ENCODE measurements at regions of chr10 and their contacts with region 1.

Region 1: DNA sequence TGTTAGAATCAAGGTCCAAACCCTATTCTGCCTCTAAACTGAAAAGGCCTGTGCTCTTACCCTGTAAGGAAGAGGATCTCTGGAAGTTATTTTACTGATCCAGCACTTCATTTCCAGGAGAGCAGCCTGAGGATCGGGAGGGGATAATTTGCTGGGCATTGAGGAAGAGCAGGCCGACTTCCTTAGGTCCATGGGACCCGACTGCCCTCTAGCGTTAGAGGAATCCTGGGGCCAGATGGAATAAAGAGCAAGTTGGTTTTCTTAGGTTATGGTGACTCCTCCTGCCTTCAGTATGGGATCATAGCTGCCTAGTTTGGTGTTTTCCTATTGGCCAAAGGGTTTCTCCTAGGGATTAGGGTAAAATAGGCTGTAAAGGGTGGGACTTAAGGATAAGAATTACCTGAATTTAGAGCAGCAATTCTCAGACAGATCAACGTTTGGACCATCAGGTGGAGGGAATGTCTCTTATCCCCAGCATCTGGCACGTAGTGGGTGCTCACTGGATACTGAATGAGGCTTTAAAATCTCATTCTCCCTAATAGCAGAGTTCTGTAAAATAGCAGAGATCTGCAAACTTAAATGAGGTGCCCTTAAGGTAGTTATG is 40.0 kb upstream of the SORBS1 start:
- DNase-seq: peak; percentile 78
- H3K4me3 ChIP-seq: no peak overlapping the region
- H3K27ac ChIP-seq: no peak overlapping the region
- H3K4me1 ChIP-seq: no peaks in the 10 kb centered on the region
- H3K27me3 ChIP-seq: no peaks in the 10 kb centered on the region
- CTCF ChIP-seq: peak; percentile 74 to 94 (median 92)
- POLR2A ChIP-seq: no peak

Region 2: DNA sequence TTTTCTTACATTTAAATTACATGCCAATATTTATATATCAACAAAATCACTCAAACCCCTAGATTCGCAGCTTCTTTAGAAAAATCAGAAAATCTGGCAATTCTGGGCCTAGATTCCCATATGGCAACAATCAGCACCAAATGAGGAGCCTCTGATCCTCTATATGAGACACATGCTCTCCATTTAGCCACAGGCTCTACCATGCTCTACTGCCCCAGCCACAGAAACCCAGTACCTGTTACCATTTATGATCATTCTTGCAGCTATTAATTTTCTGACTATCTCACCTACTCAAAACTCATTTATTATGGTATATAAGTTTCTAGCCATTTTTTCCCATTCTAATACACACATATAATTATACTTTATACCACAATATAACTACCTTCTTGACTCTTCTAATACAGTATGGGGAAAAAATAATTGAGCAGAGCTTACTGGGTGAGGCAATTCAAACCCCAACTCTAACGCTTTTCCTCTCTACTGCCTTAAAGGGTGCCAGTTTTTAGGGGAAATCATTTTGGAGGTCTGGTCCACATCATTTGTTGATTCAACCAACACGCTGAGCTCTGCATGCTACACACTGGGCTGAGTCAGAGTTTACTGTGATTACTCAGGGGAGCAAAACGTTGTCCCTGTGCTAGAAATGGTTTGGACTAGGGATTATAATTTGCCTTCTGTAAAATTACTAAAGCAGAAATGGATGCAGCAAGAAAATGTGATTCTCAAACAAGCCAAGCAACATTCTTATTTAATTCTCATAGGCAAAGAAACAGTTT is 322.0 kb before region 1 on chr10:
- intact Hi-C with region 1: no loop called
- DNase-seq: no peak
- H3K4me3 ChIP-seq: no peak overlapping the region
- H3K27ac ChIP-seq: peak overlapping the region; percentile 47 to 52
- H3K4me1 ChIP-seq: no peaks in the 10 kb centered on the region
- H3K27me3 ChIP-seq: no peaks in the 10 kb centered on the region
- CTCF ChIP-seq: no peak
- POLR2A ChIP-seq: no peak

Region 3: DNA sequence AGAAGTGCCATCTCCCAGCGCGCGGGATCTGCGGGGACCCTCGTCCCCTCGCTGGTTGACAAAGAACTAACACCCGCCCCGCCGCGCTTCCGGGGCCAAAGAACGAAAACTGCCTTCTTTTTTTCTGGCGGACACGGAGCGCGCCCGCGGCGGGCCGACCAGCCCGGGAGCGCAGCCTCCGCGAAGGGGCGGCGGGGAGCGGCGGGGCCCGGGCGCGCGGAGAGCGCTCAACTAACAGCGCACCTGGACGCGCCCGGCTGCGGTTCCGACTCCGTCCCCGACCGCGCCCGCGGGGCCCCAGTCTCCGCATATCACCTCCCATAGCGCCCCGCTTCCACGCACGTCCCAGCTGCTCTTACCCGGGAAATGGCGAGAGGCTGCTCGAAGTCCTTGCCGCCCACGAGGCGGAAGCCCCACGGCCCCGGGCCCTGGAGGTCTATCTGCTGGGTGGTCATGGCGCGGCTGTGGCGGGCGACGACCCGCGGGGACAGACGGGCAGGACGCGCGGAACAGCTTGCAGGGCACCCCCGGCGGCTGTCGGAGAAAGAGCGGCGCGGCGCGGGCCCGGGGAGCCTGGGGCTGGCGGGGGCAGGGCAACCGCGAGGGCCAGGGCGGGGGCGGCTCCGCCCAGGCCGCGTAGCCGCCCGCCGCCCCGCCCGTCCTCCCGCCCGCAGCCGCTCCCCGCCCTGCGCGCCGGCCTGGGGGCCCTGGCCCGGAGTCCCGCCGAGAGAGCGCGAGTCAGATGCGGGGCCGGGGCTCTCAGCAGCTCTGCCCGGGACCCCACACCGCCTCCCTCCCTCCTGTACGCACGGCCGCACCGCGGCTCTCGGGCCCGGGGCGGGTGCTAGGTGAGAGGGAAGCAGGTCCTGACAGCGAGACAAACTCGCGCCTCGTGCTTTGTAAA is 310.5 kb before region 1 on chr10 and contains the start of gene PDLIM1:
- intact Hi-C with region 1: no loop called
- DNase-seq: peak; percentile 60
- H3K4me3 ChIP-seq: peak within 1 kb of the TSS; percentile 86 to 88
- H3K27ac ChIP-seq: peak within 1 kb of the TSS; percentile 78
- H3K4me1 ChIP-seq: no peaks in the 10 kb centered on the region
- H3K27me3 ChIP-seq: no peaks in the 10 kb centered on the region
- CTCF ChIP-seq: peak in 2 of 4 experiments; percentile 39 to 40
- POLR2A ChIP-seq: peak; percentile 92
- total RNA-seq, gene PDLIM1: 63.2 to 82.0 TPM

Region 4: GRCh38 chr10:95374597-95375209 is 226.5 kb before region 1 on chr10:
- intact Hi-C with region 1: loop called (anchors 2 kb)
- DNase-seq: peak; percentile 65
- H3K4me3 ChIP-seq: no peak overlapping the region
- H3K27ac ChIP-seq: no peak overlapping the region
- H3K4me1 ChIP-seq: no peaks in the 10 kb centered on the region
- H3K27me3 ChIP-seq: no peaks in the 10 kb centered on the region
- CTCF ChIP-seq: peak; percentile 84 to 89 (median 87)
- POLR2A ChIP-seq: no peak

Region 5: GRCh38 chr10:95430231-95430951 is 170.8 kb before region 1 on chr10:
- intact Hi-C with region 1: loop called (anchors 2 kb)
- DNase-seq: peak; percentile 42
- H3K4me3 ChIP-seq: no peak overlapping the region
- H3K27ac ChIP-seq: no peak overlapping the region
- H3K4me1 ChIP-seq: no peaks in the 10 kb centered on the region
- H3K27me3 ChIP-seq: no peaks in the 10 kb centered on the region
- CTCF ChIP-seq: peak; percentile 92 to 98 (median 96)
- POLR2A ChIP-seq: no peak

Region 6: DNA sequence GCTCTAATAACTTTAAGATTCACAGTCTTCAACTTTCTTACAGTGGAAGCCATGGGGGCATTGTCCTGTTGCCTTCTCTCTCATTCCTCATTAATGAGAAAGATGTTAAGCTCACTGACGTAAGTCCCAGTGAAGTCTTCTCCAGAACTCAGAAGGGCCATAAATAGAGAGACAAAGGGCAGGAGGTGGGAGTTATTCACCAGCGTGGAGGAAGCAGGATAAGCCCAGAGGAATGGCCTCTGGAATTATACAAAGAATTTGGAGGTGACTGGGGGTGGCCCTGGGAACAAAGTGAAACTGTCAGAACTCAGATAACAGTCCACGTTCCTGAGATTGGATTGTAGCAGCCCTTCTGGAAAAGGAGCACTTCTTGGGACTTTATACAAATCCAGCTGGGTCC is 92.5 kb before region 1 on chr10:
- intact Hi-C with region 1: loop called (anchors 10 kb)
- DNase-seq: no peak
- H3K4me3 ChIP-seq: no peak overlapping the region
- H3K27ac ChIP-seq: peak overlapping the region; percentile 66 to 69
- H3K4me1 ChIP-seq: no peaks in the 10 kb centered on the region
- H3K27me3 ChIP-seq: no peaks in the 10 kb centered on the region
- CTCF ChIP-seq: no peak
- POLR2A ChIP-seq: no peak

Region 7: GRCh38 chr10:95561182-95562075 is 39.8 kb before region 1 on chr10 and contains the start of gene SORBS1:
- intact Hi-C with region 1: loop called (anchors 5 kb)
- DNase-seq: peak; percentile 97
- H3K4me3 ChIP-seq: peak within 1 kb of the TSS; percentile 72 to 80
- H3K27ac ChIP-seq: peak within 1 kb of the TSS; percentile 90 to 92
- H3K4me1 ChIP-seq: no peaks in the 10 kb centered on the region
- H3K27me3 ChIP-seq: no peaks in the 10 kb centered on the region
- CTCF ChIP-seq: peak in 1 of 4 experiments; percentile 21
- POLR2A ChIP-seq: peak; percentile 99
- total RNA-seq, gene SORBS1: 84.6 to 189 TPM

Measured in prostate gland (tissue), 2 donors.